A673 (cell line): ENCODE measurements at regions of chr6 and their contacts with region 1.

Region 1: GRCh38 chr6:116648156-116648555 is 20.4 kb downstream of the ZUP1 start:
- DNase-seq: no peak
- H3K4me3 ChIP-seq: no peak overlapping the region
- H3K27ac ChIP-seq: no peak overlapping the region
- H3K4me1 ChIP-seq: no peaks in the 10 kb centered on the region
- H3K27me3 ChIP-seq: no peaks in the 10 kb centered on the region
- CTCF ChIP-seq: no peak

Region 2: GRCh38 chr6:116279260-116280063 is 368.7 kb before region 1 on chr6 and contains the start of gene TSPYL1:
- CTCF ChIA-PET with region 1: no interaction called
- POLR2A ChIA-PET with region 1: no interaction called
- intact Hi-C with region 1: loop called (anchors 5 kb)
- DNase-seq: peak; percentile 97
- H3K4me3 ChIP-seq: peak within 1 kb of the TSS; percentile 94
- H3K27ac ChIP-seq: peak within 1 kb of the TSS; percentile 92
- H3K4me1 ChIP-seq: peaks cover 33% of the 10 kb centered on the region
- H3K27me3 ChIP-seq: no peaks in the 10 kb centered on the region
- CTCF ChIP-seq: 0 out of 2 replicates have a peak, but pooled peaks have one; percentile 18
- total RNA-seq, gene TSPYL1: 39.7 and 41.1 TPM in 2 replicates

Region 3: GRCh38 chr6:116531675-116532570 is 116.2 kb before region 1 on chr6:
- CTCF ChIA-PET with region 1: no interaction called
- POLR2A ChIA-PET with region 1: no interaction called
- intact Hi-C with region 1: loop called (anchors 5 kb)
- DNase-seq: peak; percentile 75
- H3K4me3 ChIP-seq: no peak overlapping the region
- H3K27ac ChIP-seq: no peak overlapping the region
- H3K4me1 ChIP-seq: peaks cover 3% of the 10 kb centered on the region
- H3K27me3 ChIP-seq: no peaks in the 10 kb centered on the region
- CTCF ChIP-seq: peak; percentile 81

Region 4: DNA sequence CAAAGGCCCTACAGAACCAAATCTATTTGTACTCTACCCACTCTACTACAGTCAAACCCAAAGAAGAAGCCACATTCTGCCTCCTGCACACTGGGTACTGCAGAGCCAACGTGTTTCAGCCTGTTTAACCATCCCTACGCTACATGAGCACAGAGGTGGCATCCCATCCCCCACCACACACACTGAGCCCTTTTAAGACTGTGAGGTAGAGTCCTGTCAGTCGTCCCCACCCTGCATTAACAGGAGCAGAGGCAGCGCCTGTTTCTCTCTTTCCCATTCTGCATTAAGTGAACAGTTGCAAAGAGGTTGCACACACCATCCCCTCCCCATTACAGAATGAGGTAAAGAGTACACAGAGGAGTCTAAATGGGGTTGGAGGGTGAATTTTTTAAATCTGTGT is 37.1 kb before region 1 on chr6:
- CTCF ChIA-PET with region 1: no interaction called
- POLR2A ChIA-PET with region 1: no interaction called
- intact Hi-C with region 1: no loop called
- DNase-seq: no peak
- H3K4me3 ChIP-seq: no peak overlapping the region
- H3K27ac ChIP-seq: no peak overlapping the region
- H3K4me1 ChIP-seq: no peaks in the 10 kb centered on the region
- H3K27me3 ChIP-seq: peaks cover 5% of the 10 kb centered on the region
- CTCF ChIP-seq: no peak

Region 5: GRCh38 chr6:116714761-116715160 is 66.6 kb after region 1 on chr6:
- CTCF ChIA-PET with region 1: no interaction called
- POLR2A ChIA-PET with region 1: no interaction called
- intact Hi-C with region 1: no loop called
- DNase-seq: no peak
- H3K4me3 ChIP-seq: no peak overlapping the region
- H3K27ac ChIP-seq: no peak overlapping the region
- H3K4me1 ChIP-seq: no peaks in the 10 kb centered on the region
- H3K27me3 ChIP-seq: no peaks in the 10 kb centered on the region
- CTCF ChIP-seq: no peak